ENCODE measurements at regions of chr10 and their contacts with region 1.

Region 1: GRCh38 chr10:69087590-69088470 is at the start of gene SRGN:
- DNase-seq: peak; percentile 91
- H3K4me3 Mint-ChIP-seq: peak within 1 kb of the TSS; percentile 89
- H3K27ac Mint-ChIP-seq: peak within 1 kb of the TSS; percentile 99
- H3K4me1 Mint-ChIP-seq: peaks cover 59% of the 10 kb centered on the region
- H3K27me3 Mint-ChIP-seq: no peaks in the 10 kb centered on the region
- total RNA-seq, gene SRGN: 197 to 198 TPM

Region 2: GRCh38 chr10:68720793-68721672 is 366.8 kb before region 1 on chr10 and contains the start of gene CCAR1:
- CTCF ChIA-PET with region 1: no interaction called
- intact Hi-C with region 1: loop called (anchors 1 kb)
- DNase-seq: peak; percentile 98
- H3K4me3 Mint-ChIP-seq: peak within 1 kb of the TSS; percentile 96
- H3K27ac Mint-ChIP-seq: peak within 1 kb of the TSS; percentile 96
- H3K4me1 Mint-ChIP-seq: peaks cover 16% of the 10 kb centered on the region
- H3K27me3 Mint-ChIP-seq: no peaks in the 10 kb centered on the region
- total RNA-seq, gene CCAR1: 80.7 to 87.9 TPM

Region 3: DNA sequence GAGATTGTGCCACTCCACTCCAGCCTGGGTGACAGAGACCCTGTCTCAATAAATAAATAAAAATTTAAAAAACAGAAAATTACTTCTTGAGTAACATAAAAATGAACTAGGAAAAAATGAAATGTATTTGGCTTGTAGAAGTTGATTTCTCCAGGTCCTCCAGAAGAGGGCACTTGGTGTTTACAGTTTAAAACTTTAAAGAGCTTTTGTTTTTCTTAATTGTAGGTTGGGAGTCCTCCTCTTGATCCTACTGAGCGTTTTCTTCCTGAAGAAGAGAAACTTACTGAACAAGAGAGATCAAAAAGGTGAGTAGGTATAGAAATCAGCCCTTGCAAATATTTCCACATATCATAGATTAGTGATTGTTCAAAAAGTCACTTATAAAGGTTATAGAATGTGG is 83.0 kb before region 1 on chr10:
- CTCF ChIA-PET with region 1: interaction called, 143 read pairs
- intact Hi-C with region 1: loop called (anchors 1 kb)
- DNase-seq: no peak
- H3K4me3 Mint-ChIP-seq: no peak overlapping the region
- H3K27ac Mint-ChIP-seq: no peak overlapping the region
- H3K4me1 Mint-ChIP-seq: peaks cover 6% of the 10 kb centered on the region
- H3K27me3 Mint-ChIP-seq: no peaks in the 10 kb centered on the region

Region 4: DNA sequence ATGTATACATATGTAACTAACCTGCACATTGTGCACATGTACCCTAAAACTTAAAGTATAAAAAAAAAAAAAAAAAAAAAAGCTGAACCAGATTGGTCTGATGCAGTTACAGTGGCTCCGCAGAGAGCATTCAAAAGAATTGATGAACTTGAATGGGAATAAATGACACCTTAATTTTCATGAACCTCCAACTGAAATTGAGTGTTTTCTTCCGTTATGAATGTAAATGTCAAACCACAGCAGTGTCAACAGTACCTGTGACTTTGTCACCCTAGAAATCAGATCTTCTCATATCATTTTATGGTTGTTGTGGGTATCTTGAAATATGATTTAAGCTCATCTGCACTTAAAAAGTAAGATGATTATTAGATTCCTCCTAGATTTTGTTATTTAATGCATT is 32.6 kb before region 1 on chr10:
- CTCF ChIA-PET with region 1: interaction called, 3 read pairs
- intact Hi-C with region 1: loop called (anchors 1 kb)
- DNase-seq: no peak
- H3K4me3 Mint-ChIP-seq: no peak overlapping the region
- H3K27ac Mint-ChIP-seq: peak overlapping the region; percentile 52
- H3K4me1 Mint-ChIP-seq: peaks cover 44% of the 10 kb centered on the region
- H3K27me3 Mint-ChIP-seq: no peaks in the 10 kb centered on the region

Region 5: DNA sequence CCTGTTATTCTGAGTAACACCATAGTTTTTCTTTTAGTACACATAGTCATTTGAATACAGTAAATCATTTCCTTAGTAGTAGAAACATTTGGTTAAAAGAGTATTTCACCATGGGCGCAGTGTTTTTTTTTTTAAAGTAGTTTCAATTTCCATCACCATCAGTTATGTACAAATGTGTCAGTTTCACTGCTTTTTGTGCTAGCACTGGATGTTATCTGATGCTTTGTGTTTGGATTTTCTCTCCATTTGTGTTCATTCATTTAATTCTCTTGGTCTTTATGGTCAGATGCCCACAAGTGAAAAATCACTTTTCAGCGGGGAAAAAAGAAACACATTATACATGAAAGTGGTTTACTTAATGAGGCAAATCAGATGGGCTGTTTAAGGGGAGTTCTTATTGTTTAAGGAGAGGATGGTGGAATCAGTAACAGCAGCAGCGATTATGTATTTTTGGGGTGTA is 174.5 kb after region 1 on chr10:
- CTCF ChIA-PET with region 1: no interaction called
- intact Hi-C with region 1: loop called (anchors 1 kb)
- DNase-seq: no peak
- H3K4me3 Mint-ChIP-seq: no peak overlapping the region
- H3K27ac Mint-ChIP-seq: peak overlapping the region; percentile 62
- H3K4me1 Mint-ChIP-seq: peaks cover 17% of the 10 kb centered on the region
- H3K27me3 Mint-ChIP-seq: no peaks in the 10 kb centered on the region

Region 6: DNA sequence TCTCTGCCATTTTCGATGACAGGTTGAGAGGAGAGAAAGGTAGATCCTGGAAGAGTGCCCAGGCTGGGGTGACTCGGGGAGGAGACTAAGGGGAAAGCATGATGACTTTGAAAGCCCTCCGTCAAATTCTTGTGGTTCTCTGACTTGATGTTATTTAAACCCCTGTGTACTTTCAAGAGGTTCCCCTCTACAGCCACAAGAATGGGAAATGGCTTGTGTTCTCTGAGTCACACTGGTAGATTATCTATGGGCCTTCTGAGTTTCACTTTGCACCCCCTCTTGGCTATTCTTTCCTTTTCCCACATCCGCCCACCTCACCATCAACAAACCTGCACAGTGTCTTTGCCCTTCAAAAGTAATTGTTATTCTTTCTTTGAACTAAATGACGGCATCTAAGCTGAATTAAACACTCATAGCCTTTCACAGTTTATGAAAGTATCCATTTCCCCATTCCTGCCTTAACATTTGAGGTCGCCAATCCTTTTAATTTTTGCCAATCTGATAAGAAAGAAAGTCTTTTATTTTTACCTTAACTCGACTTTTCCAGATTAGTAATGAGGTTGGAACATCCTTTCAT is 1490.6 kb after region 1 on chr10:
- CTCF ChIA-PET with region 1: no interaction called
- intact Hi-C with region 1: loop called (anchors 2 kb)
- DNase-seq: peak; percentile 88
- H3K4me3 Mint-ChIP-seq: no peak overlapping the region
- H3K27ac Mint-ChIP-seq: peak overlapping the region; percentile 57
- H3K4me1 Mint-ChIP-seq: peaks cover 37% of the 10 kb centered on the region
- H3K27me3 Mint-ChIP-seq: no peaks in the 10 kb centered on the region

Measured in activated naive CD4-positive, alpha-beta T cell treated with anti-CD3 and anti-CD28 coated beads for 36 hours (primary cell).